Heart left ventricle (tissue), 16 donors: ENCODE measurements at regions of chr12 and their contacts with region 1.

Region 1: DNA sequence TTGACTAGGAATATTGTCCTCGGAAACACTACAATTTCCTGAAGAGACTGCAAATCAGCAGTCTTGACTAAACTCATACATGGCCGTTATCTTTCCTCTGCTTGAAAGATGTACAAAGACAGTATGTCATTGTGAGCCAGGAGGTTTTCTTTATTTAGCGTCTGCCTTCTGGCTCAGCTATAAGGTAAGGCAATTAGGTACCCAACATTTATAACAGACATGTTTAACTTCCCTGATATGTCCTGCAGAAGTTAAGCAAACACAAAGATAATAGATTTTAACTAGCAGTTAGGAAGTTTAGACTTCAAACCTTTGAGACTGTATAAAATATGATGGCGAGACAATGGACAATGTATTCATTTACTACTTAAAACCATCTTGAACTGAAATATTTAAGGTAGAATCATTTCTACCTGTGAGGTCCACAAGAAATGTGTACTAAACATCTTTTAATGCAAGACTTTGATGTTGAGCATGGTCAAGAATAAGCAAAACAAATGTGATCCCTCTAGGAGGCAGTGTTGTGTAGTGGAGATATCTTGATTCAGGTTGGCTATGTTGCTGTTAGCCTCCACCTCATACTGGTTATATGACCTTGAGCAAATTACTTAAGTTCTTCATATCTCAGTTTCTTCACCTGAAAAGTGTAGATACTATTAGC is 96.2 kb upstream of the EEA1 start:
- DNase-seq: no peak
- ATAC-seq: peak in 2 of 4 donors; percentile 43 to 44
- H3K4me3 ChIP-seq: no peak overlapping the region
- H3K27ac ChIP-seq: no peak overlapping the region
- H3K4me1 ChIP-seq: peaks cover 0 to 16% (median 0%) of the 10 kb centered on the region in 12 donors
- H3K27me3 ChIP-seq: no peaks in the 10 kb centered on the region
- CTCF ChIP-seq: peak; percentile 6 to 69 (median 53)
- POLR2A ChIP-seq: no peak

Region 2: DNA sequence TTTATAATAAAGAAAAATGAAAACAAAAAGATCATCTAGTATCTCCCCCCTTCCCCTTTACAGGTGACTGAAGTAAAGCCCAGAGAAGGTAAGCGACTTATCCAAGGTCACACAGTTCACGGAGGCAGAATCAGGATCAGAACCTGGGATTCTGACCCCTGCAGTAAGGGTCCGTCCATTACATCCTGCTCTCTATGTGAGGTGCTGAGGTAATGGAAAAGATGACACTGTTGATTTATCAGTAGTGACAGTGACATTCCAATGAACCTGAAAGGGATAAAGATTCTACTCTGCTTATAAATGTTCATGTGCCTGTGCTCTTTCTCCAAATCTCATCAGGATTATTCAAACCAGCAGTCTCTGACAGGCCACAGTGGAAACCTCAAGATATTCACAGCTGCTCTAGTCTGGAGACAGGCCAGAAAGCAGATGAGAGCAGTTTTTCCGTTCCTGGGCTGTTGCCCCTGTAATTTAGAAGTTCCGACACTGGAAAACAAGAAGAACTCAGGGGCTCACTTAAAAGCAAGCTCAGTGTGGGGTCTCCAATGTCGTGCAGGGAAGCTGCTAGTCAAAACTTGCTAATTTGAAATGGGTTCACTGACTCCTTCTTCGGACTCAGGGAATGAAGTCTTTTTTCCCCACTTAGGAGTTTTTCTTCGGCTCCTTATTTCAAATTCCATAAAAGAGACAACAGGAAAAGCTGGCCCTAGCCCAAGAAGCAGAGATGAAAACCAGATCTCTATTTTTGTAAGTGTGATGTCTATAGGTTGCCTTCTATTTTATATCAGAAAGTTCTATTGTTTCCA is 35.6 kb after region 1 on chr12:
- intact Hi-C with region 1: loop called in 1 of 10 experiments (anchors 5 kb)
- DNase-seq: peak in 4 of 5 donors; percentile 39 to 56 (median 48)
- ATAC-seq: peak; percentile 38 to 75 (median 60)
- H3K4me3 ChIP-seq: peak overlapping the region in 6 of 12 donors; percentile 2 to 35 (median 24)
- H3K27ac ChIP-seq: peak overlapping the region; percentile 62 to 94 (median 82)
- H3K4me1 ChIP-seq: peaks cover 0 to 40% (median 23%) of the 10 kb centered on the region in 12 donors
- H3K27me3 ChIP-seq: no peaks in the 10 kb centered on the region
- CTCF ChIP-seq: peak in 3 of 12 donors; percentile 30 to 32 (median 31)
- POLR2A ChIP-seq: no peak

Region 3: DNA sequence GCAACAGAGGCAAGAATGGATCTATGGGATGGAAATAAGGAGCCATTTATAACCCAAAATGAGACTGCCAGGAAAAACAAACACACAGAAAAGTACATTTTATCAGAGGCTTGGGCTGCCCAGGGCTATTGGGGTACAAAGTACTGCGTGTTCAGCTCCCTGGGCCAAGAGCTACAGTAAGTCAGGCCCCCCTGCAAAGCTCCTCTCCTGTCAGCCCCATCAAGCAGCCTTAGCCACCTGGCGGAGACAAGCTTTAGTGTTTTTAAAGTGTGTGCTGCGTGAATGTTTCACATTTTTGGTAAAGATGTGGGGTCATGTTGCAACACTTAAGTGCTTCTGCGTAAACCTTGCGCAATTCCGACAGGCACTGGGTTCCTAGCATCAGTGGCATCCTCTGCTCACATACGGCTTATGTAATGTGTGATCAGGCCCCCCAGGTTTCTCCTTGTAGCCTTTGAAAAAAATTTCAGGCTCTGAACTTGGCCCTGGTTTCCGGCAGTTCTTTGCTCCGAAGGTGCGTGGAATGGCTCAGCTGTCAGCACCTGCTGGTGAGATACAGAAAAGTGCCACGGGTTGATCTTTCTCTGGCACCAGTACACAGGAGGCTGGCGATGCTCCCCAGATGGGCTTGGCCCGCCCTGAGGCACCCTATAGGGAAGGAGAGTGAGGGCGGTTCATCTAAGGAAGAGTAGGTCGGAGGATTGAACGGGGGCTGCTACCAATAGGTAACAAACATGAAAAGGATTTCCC is 102.5 kb after region 1 on chr12:
- intact Hi-C with region 1: loop called in 6 of 10 experiments (anchors 5 kb)
- DNase-seq: peak; percentile 77 to 92 (median 82)
- ATAC-seq: peak; percentile 91 to 96 (median 92)
- H3K4me3 ChIP-seq: peak overlapping the region in 2 of 12 donors; percentile 6 to 15
- H3K27ac ChIP-seq: peak overlapping the region; percentile 61 to 92 (median 81)
- H3K4me1 ChIP-seq: peaks cover 0 to 27% (median 14%) of the 10 kb centered on the region in 12 donors
- H3K27me3 ChIP-seq: no peaks in the 10 kb centered on the region
- CTCF ChIP-seq: peak in 10 of 12 donors; percentile 21 to 48 (median 34)
- POLR2A ChIP-seq: no peak

Region 4: DNA sequence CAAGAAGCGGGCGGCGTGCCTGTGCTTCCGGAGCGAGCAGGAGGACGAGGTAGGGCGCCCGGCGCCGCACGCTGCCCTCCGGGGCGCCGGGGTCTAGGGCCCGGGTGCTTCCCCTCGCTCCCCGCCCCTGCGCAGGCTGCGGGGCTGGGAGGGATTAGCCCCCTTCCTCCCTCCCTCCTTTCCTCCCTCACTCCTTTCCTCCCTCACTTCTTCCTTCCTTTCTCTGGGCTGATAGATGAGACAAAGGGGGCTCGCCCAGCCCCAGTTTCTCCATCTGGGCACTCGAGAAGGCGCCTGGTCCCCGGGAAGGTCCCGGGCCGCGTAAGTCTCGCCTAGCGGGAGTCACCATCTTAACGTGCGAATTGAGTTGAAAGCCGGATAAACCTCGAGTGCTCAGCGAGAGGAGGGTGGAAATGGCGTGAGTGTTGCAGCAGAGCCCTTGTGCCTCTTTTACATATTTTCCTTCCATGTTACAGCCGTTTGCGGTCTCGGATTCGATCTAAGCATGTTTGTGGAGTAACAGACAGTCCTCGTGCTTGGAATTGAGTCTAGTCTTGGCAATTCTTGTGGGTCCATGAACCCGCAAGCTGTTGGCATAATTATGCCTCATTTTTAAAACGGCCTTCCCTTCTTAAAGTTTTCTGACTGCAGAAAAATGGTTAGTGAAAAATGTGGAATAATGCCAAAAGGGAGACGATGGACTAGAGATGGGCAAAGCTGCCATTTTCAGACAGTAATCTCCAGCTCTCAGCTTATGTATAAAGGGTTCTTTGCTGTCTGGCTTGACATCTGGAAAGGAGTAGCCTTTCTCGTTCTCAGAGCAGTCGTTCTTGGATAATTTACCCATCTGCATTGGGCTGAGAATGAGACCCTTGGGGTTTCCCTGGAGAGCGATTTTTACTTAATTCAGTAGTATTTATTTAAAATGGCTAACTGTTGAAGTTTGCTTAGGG is 353.4 kb after region 1 on chr12:
- intact Hi-C with region 1: loop called in 2 of 10 experiments (anchors 5 to 10 kb)
- DNase-seq: peak in 4 of 5 donors; percentile 38 to 50 (median 46)
- ATAC-seq: peak in 1 of 4 donors; percentile 14
- H3K4me3 ChIP-seq: peak overlapping the region; percentile 57 to 97 (median 86)
- H3K27ac ChIP-seq: peak overlapping the region; percentile 78 to 97 (median 96)
- H3K4me1 ChIP-seq: peaks cover 0 to 68% (median 30%) of the 10 kb centered on the region in 12 donors
- H3K27me3 ChIP-seq: no peaks in the 10 kb centered on the region
- CTCF ChIP-seq: no peak
- POLR2A ChIP-seq: peak in 1 of 2 donors; percentile 17